ENCODE measurements at regions of chr10 and their contacts with region 1.

Region 1: GRCh38 chr10:70169649-70170364 is 507 bp downstream of the SAR1A start:
- DNase-seq: no peak
- ATAC-seq: peak; percentile 18
- H3K4me3 ChIP-seq: peak overlapping the region; percentile 71 to 96 (median 86)
- H3K4me3 Mint-ChIP-seq: peak overlapping the region; percentile 91
- H3K27ac ChIP-seq: peak overlapping the region; percentile 80 to 93
- H3K27ac Mint-ChIP-seq: peak overlapping the region; percentile 94
- H3K4me1 ChIP-seq: peaks cover 21 to 27% of the 10 kb centered on the region in 2 donors
- H3K4me1 Mint-ChIP-seq: peaks cover 49% of the 10 kb centered on the region
- H3K27me3 ChIP-seq: no peaks in the 10 kb centered on the region
- H3K27me3 Mint-ChIP-seq: no peaks in the 10 kb centered on the region
- CTCF ChIP-seq: no peak

Region 2: DNA sequence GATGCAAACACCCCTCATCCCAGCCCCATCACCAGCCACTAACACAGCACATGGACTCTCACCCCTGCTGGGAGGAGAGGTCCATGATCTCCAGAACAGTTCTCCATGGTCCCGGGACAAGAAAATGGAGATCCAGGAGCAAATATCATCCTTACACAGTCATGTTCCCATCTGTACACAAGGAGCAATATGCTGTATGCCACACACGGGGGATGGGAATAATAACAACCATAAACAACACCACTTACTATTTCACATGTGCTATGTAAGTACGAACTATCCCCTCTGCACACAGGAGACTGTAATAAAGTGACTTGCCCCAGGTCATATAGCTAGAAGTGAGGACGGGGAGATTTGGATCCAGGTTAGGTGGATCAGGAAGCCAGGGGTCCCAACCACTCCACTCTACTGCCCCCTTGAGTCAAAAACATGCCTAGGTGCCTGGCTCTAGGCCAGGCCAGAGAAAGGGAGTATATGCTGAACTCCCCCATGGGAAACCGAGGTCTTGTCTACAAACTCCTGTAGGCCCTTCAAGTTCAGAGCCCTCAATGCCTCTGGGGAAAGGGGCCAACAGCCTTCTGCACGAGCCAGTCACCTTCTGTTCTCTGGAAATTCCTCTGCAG is 178.5 kb after region 1 on chr10:
- CTCF ChIA-PET with region 1: no interaction called
- POLR2A ChIA-PET with region 1: interaction called, 13 read pairs
- intact Hi-C with region 1: no loop called
- DNase-seq: peak; percentile 50
- ATAC-seq: peak; percentile 45
- H3K4me3 ChIP-seq: no peak overlapping the region
- H3K4me3 Mint-ChIP-seq: no peak overlapping the region
- H3K27ac ChIP-seq: no peak overlapping the region
- H3K27ac Mint-ChIP-seq: no peak overlapping the region
- H3K4me1 ChIP-seq: no peaks in the 10 kb centered on the region
- H3K4me1 Mint-ChIP-seq: no peaks in the 10 kb centered on the region
- H3K27me3 ChIP-seq: no peaks in the 10 kb centered on the region
- H3K27me3 Mint-ChIP-seq: no peaks in the 10 kb centered on the region
- CTCF ChIP-seq: no peak

Region 3: GRCh38 chr10:70440296-70441160 is 270.7 kb after region 1 on chr10:
- CTCF ChIA-PET with region 1: no interaction called
- POLR2A ChIA-PET with region 1: no interaction called
- intact Hi-C with region 1: no loop called
- DNase-seq: no peak
- ATAC-seq: peak; percentile 31
- H3K4me3 ChIP-seq: peak overlapping the region in 2 of 5 experiments; percentile 21 to 38
- H3K4me3 Mint-ChIP-seq: peak overlapping the region; percentile 75
- H3K27ac ChIP-seq: no peak overlapping the region
- H3K27ac Mint-ChIP-seq: no peak overlapping the region
- H3K4me1 ChIP-seq: peaks cover 17 to 20% of the 10 kb centered on the region in 2 donors
- H3K4me1 Mint-ChIP-seq: peaks cover 13% of the 10 kb centered on the region
- H3K27me3 ChIP-seq: peaks cover 0 to 44% (median 14%) of the 10 kb centered on the region in 4 experiments
- H3K27me3 Mint-ChIP-seq: peaks cover 30% of the 10 kb centered on the region
- CTCF ChIP-seq: no peak